ENCODE measurements at regions of chr1 and their contacts with region 1.

Region 1: DNA sequence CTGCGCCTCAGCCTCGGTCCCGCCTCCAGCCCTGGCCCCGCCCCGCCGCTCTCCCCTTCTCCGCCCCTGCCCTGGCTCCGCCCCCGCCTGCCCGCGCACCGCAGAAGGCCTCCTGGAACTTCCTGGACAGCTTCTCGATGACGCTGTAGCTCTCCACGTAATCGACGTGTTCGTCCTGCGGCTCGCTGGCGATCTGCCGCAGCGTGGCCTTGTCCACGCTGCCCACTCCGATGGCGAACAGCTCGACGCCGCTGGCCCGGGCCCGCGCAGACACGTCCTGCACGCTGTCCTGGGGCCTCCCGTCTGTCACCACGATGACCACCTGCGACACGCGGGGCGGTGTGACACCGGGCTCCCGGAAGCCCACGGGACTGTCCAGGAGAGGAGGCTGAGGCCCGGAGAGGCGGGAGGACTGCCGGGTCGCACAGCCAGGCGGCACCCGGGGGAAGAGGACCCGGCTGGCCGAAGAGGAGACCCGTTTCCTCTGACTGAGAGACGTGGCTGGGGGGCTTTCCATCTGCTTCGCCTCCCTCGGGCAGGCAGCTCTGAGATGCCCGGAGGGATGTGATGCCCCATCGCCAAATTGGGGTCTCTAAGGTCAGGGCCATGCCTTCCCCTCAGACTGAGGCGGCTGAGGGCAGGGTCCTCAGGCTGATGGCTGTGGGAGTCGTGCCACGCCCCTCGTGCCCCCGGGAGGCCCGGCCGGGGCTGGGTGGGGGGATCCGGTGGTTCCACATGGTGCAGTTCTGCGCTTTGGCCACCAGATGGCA is 4.6 kb downstream of the MATN1 start:
- DNase-seq: peak; percentile 96
- H3K4me3 ChIP-seq: peak overlapping the region; percentile 60 to 75 (median 68)
- H3K27ac ChIP-seq: peak overlapping the region; percentile 95 to 100 (median 100)
- H3K4me1 ChIP-seq: peaks cover 10 to 22% (median 17%) of the 10 kb centered on the region in 4 donors
- H3K27me3 ChIP-seq: no peaks in the 10 kb centered on the region
- CTCF ChIP-seq: peak in 2 of 3 experiments; percentile 97 to 99
- EP300 ChIP-seq: no peak
- POLR2A ChIP-seq: peak; percentile 59

Region 2: GRCh38 chr1:30668024-30668423 is 50.8 kb before region 1 on chr1:
- intact Hi-C with region 1: no loop called
- DNase-seq: no peak
- H3K4me3 ChIP-seq: no peak overlapping the region
- H3K27ac ChIP-seq: no peak overlapping the region
- H3K4me1 ChIP-seq: peaks cover 0 to 33% (median 12%) of the 10 kb centered on the region in 4 donors
- H3K27me3 ChIP-seq: no peaks in the 10 kb centered on the region
- CTCF ChIP-seq: no peak
- EP300 ChIP-seq: no peak
- POLR2A ChIP-seq: no peak

Region 3: DNA sequence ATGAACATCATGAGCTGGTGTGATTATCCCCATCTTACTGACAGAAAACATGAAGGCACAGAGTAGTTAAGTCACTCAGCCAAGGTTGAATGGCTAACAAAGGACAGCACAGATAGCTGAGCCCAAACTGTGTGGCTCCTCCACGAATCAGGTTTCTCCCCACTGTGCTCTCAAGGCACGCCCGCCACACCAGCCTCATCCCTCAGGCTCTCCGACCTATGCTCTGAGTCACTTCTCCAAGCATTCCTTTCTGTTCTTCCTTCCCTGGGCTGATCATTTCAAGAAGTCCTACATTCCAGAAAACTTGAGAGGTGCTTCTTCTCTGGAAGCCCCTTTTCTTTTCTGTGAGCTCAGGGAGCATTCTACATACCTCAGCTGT is 215.0 kb after region 1 on chr1:
- intact Hi-C with region 1: loop called (anchors 5 kb)
- DNase-seq: no peak
- H3K4me3 ChIP-seq: no peak overlapping the region
- H3K27ac ChIP-seq: no peak overlapping the region
- H3K4me1 ChIP-seq: peaks cover 0 to 19% (median 5%) of the 10 kb centered on the region in 4 donors
- H3K27me3 ChIP-seq: no peaks in the 10 kb centered on the region
- CTCF ChIP-seq: no peak
- EP300 ChIP-seq: no peak
- POLR2A ChIP-seq: no peak

Measured in esophagus muscularis mucosa (tissue), 4 donors.